ENCODE measurements at regions of chr7 and their contacts with region 1.

Region 1: DNA sequence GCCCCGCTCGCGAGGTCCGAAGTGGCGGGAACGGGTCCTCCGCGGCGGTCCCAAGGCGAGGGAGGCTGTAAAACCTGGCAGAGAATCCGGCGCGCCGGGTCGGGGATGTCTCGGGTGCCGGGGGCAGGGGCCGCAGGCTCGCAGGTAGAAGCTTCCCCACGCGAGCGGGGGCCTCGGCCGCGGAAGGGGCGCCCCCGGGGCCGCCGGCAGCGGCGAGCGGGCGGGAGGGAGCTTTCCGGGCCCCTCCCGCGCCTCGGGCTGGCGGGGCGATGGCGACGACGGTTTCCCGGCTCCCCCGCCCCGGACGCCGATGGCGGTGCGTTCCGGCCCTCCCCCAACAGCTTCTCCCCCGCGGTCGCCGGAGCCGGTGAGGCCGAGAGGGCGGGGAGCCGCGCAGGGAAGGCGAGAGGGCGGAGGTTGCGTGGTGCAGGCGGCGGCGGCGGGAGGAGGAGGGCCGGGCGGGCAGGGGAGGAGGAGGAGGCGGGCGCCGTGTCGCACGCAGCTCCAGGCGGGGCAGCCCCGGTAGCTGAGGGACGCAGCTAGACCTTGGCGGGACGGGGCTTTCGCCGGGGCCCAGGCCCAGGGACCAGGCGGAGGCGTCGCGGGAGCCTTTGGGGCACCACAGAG is at the start of gene CUL1:
- DNase-seq: peak; percentile 91
- ATAC-seq: peak; percentile 67
- H3K4me3 Mint-ChIP-seq: peak within 1 kb of the TSS; percentile 91
- H3K27ac Mint-ChIP-seq: peak within 1 kb of the TSS; percentile 97
- H3K4me1 Mint-ChIP-seq: peaks cover 59% of the 10 kb centered on the region
- H3K27me3 Mint-ChIP-seq: no peaks in the 10 kb centered on the region
- total RNA-seq, gene CUL1: 72.7 to 76.7 TPM

Region 2: GRCh38 chr7:148563583-148564274 is 134.8 kb before region 1 on chr7:
- CTCF ChIA-PET with region 1: no interaction called
- POLR2A ChIA-PET with region 1: no interaction called
- intact Hi-C with region 1: loop called in 1 of 2 experiments (anchors 5 kb)
- DNase-seq: no peak
- ATAC-seq: peak; percentile 57
- H3K4me3 Mint-ChIP-seq: peak overlapping the region; percentile 40
- H3K27ac Mint-ChIP-seq: peak overlapping the region; percentile 81
- H3K4me1 Mint-ChIP-seq: peaks cover 17% of the 10 kb centered on the region
- H3K27me3 Mint-ChIP-seq: peaks cover 8% of the 10 kb centered on the region

Region 3: DNA sequence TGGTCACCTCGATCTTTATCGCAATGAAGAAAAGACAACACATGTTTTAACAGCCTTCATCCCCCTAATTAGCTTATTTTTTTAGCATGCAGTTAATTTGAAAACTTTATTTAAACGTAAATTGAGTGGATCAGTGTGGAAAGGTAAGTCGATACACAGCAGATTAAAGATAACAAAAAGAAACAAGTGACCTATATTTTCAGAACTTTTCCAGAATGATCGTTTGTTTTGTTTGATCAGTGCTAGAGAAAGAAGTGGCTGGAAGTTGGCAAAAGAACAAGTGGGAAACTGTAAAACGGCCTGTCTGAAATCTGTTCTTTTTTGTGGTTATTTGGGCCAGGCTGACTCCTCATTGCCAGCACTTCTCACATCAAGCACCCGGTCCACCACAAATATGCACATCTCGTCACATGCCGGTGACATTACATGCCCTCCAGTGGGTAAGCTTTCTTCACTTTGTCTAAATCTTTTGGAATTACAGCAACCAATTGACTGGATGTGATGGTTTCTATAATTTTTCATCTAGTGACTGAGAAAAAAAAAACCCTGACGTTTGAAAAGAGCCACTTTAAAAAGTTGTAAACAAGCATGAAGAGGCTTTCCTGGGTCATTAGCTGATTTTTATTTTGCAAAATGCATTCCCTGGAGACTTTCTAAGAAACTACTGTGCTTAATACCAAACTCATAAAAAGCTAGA is 74.8 kb before region 1 on chr7:
- CTCF ChIA-PET with region 1: interaction called, 3 read pairs
- POLR2A ChIA-PET with region 1: no interaction called
- intact Hi-C with region 1: loop called in 1 of 2 experiments (anchors 10 kb)
- DNase-seq: no peak
- ATAC-seq: no peak
- H3K4me3 Mint-ChIP-seq: no peak overlapping the region
- H3K27ac Mint-ChIP-seq: no peak overlapping the region
- H3K4me1 Mint-ChIP-seq: peaks cover 59% of the 10 kb centered on the region
- H3K27me3 Mint-ChIP-seq: no peaks in the 10 kb centered on the region

Region 4: DNA sequence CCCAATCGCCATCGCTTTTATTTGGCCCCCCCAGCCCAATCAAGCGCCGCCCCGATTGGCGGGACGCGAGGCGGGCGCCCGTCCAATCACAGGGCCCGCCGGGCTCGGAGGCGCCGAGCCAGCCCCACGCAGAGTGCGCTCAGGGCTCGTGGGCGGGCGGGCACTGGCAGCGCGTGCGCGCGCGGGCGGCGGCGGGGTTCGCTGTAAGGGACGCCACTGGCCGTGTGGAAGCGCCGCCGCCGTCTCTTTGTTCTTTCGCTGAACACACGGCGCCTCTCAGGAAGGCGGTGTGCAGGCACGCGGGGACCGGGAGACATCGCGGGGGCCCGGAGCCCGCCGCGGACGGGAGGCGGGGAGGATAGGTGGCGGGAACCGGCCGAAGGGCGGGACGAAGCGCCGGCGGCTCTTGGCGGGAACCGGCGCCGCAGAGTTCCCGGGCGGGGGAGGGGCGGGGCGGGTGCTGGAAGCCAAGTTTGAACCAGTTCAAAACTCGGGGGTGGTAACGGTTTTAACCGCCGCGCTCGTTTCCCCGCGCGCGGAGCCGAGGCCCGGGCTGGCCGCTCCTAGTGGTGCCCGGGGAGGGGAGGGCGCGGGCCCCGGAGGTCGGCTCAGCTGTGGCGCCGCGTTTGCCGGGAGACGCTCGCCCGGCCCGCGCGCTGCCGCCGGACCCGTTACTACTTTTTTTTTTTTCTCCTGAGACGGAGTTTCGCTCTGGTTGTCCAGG is 186.0 kb after region 1 on chr7:
- CTCF ChIA-PET with region 1: interaction called, 3 read pairs
- POLR2A ChIA-PET with region 1: interaction called, 7 read pairs
- intact Hi-C with region 1: loop called in 1 of 2 experiments (anchors 1 kb)
- DNase-seq: peak; percentile 97
- ATAC-seq: peak; percentile 92
- H3K4me3 Mint-ChIP-seq: peak overlapping the region; percentile 95
- H3K27ac Mint-ChIP-seq: peak overlapping the region; percentile 99
- H3K4me1 Mint-ChIP-seq: peaks cover 34% of the 10 kb centered on the region
- H3K27me3 Mint-ChIP-seq: no peaks in the 10 kb centered on the region

Region 5: GRCh38 chr7:148962823-148963582 is 264.5 kb after region 1 on chr7:
- CTCF ChIA-PET with region 1: interaction called, 3 read pairs
- POLR2A ChIA-PET with region 1: no interaction called
- intact Hi-C with region 1: loop called (anchors 2 to 5 kb)
- DNase-seq: peak; percentile 81
- ATAC-seq: peak; percentile 58
- H3K4me3 Mint-ChIP-seq: peak overlapping the region; percentile 87
- H3K27ac Mint-ChIP-seq: peak overlapping the region; percentile 93
- H3K4me1 Mint-ChIP-seq: peaks cover 28% of the 10 kb centered on the region
- H3K27me3 Mint-ChIP-seq: no peaks in the 10 kb centered on the region

Region 6: DNA sequence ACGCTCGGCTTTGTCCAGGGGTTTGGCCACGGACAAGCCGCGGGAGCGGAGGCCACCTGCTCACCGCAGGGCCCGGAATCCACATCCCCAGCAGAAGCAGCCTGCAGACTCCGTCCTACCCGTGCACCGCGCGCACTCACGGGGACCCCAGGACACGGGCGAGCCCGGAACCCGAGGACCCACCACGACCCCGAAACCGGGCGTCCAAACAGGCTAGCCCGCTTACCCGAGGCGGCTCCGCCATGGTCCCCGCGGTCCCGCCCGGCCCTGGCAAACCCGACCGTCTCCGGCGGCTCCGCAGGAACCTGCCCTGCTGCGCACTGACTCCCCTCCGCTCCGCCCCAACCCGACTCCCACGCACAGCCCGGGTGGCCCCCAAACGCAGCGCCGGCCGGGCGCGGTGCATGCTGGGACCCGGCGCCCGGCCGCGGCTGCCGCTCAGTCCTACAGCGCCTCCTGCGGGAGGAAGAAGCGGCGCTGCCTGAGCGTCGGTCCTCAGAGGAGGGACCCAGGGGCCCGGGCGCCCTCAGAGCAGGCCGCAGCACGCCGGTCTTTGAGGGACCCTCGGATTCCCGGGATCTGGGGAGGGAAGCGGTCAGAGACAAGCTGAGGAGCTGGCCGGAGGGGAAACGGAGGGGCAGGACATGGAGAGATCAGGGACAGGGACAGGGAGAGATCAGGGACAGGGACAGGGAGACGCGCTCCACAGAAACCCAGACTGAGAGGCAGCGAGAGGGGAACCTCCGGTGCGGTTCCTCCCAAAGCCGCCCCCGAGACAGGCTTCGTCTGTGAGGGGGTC is 392.1 kb after region 1 on chr7 and contains the start of gene ZNF786:
- CTCF ChIA-PET with region 1: no interaction called
- POLR2A ChIA-PET with region 1: no interaction called
- intact Hi-C with region 1: loop called in 1 of 2 experiments (anchors 2 kb)
- DNase-seq: peak; percentile 97
- ATAC-seq: peak; percentile 87
- H3K4me3 Mint-ChIP-seq: peak within 1 kb of the TSS; percentile 89
- H3K27ac Mint-ChIP-seq: peak within 1 kb of the TSS; percentile 100
- H3K4me1 Mint-ChIP-seq: peaks cover 19% of the 10 kb centered on the region
- H3K27me3 Mint-ChIP-seq: no peaks in the 10 kb centered on the region
- total RNA-seq, gene ZNF786: 4.4 to 4.8 TPM